ENCODE measurements at regions of chr6 and their contacts with region 1.

Region 1: GRCh38 chr6:137313928-137314855 is 95.0 kb upstream of the IFNGR1 start:
- DNase-seq: no peak
- H3K4me3 ChIP-seq: no peak overlapping the region
- CTCF ChIP-seq: peak; percentile 81

Region 2: GRCh38 chr6:136751522-136751956 is 562.7 kb before region 1 on chr6:
- CTCF ChIA-PET with region 1: no interaction called
- POLR2A ChIA-PET with region 1: no interaction called
- DNase-seq: no peak
- H3K4me3 ChIP-seq: no peak overlapping the region
- CTCF ChIP-seq: no peak

Region 3: DNA sequence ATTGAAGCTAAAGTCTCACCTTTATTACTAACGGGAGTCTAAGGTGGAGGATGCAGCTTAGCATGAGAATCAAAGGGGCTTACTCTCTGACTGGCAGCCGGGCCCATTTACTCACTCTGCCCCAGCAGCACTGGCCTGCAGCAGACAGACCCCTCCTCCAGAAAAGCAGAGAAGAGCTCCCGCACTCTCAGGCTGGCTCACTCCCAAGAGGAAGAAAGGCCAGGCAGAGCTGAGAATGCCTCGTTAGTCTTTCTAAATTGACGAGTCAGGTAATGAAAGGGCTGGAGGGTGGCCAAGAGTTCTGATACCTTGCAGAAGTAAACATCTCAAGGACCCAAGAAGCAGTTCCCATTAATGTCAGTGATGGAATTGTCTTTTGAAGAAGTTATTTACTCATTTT is 224.9 kb before region 1 on chr6:
- CTCF ChIA-PET with region 1: interaction called, 57 read pairs
- POLR2A ChIA-PET with region 1: no interaction called
- DNase-seq: no peak
- H3K4me3 ChIP-seq: no peak overlapping the region
- CTCF ChIP-seq: no peak

Region 4: GRCh38 chr6:137115658-137116057 is 198.5 kb before region 1 on chr6:
- CTCF ChIA-PET with region 1: no interaction called
- POLR2A ChIA-PET with region 1: no interaction called
- DNase-seq: no peak
- H3K4me3 ChIP-seq: no peak overlapping the region
- CTCF ChIP-seq: no peak

Region 5: DNA sequence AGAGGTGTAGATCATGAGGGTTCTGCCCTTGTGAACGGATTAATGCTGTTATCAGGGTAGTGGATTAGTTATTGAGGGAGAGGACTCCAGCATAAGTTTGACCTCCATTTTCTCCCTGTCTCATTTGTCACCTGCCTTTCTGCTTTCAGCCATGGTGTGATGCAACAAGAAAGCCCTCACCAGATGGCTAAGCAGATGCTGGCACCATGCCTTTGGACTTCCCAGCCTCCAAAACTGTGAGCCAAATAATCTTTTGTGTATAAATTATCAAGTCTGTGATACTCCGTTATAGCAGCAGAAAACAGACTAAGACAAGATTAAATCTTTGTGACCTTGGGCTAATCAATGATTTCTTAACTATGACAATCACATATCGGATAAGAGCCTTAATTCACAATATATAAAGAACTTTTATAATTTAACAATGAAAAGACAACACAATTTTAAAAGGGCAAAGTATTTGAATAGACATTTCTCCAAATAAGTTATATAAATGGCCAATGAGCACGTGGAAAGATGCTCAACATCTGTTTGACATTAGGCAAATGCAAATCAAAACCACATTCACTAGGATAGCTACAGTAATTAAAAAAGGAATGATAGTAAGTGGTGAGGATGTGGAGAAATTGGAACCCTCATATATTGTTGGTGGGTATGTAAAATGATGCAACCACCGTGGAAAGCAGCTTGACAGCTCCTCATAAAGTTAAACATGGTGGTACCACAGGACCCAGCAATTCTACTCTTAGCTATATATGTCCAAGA is 49.7 kb before region 1 on chr6:
- CTCF ChIA-PET with region 1: interaction called, 40 read pairs
- POLR2A ChIA-PET with region 1: no interaction called
- DNase-seq: no peak
- H3K4me3 ChIP-seq: no peak overlapping the region
- CTCF ChIP-seq: no peak

Region 6: DNA sequence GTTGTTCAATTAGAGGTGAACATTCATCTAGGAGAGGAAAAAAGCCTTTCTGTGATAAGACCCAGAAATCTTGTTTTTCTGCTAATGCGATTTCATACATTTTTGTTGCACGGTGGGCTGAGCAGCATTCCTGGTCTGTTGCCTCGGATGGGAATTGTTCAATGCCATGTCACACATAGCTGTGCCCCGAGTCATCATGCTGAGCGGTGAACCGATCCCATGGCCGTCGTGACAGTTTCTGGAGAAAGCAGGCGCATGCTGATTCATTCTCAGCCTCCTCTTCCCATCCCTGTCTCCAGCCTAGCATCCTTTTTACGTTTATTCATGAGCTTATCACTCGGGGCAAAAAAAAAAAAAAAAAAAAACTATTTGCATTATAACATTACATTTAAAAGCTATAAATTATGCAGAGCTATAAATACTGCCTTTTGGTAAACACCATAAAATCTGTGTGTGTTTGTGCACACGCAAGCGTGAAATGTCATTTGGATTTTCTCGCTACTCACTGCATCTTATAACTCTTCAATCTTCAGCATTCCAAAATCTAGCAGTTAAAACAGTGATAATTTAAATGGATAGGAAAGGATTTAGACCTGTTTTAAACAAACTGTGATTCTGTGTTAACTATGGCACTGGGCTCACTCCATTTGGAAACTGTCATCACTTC is 36.1 kb before region 1 on chr6:
- CTCF ChIA-PET with region 1: interaction called, 29 read pairs
- POLR2A ChIA-PET with region 1: no interaction called
- DNase-seq: peak; percentile 42
- H3K4me3 ChIP-seq: no peak overlapping the region
- CTCF ChIP-seq: no peak

Region 7: DNA sequence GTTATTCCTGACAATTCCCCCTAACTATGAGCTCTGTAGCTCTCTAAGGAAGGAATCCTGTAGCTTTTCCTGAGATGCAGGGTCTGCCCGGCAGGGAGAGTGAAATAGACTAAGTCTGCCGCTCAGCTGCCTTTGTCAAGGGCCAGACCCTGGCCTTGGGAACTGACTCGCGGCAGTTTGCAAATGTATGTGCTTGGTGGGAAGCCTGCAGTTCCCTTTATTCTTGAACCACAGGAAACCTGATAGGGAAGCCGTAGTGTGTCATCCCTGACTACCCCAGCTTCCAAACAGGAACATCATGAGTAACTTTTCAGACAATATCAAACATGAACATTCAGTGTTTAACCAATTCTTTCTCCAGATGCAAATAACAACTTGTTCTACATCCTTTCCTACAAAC is 16.3 kb before region 1 on chr6:
- CTCF ChIA-PET with region 1: interaction called, 27 read pairs
- POLR2A ChIA-PET with region 1: no interaction called
- DNase-seq: no peak
- H3K4me3 ChIP-seq: no peak overlapping the region
- CTCF ChIP-seq: no peak

Measured in AG04449 (cell line).